Brain microvascular endothelial cell (primary cell): ENCODE measurements at regions of chr17 and their contacts with region 1.

Region 1: DNA sequence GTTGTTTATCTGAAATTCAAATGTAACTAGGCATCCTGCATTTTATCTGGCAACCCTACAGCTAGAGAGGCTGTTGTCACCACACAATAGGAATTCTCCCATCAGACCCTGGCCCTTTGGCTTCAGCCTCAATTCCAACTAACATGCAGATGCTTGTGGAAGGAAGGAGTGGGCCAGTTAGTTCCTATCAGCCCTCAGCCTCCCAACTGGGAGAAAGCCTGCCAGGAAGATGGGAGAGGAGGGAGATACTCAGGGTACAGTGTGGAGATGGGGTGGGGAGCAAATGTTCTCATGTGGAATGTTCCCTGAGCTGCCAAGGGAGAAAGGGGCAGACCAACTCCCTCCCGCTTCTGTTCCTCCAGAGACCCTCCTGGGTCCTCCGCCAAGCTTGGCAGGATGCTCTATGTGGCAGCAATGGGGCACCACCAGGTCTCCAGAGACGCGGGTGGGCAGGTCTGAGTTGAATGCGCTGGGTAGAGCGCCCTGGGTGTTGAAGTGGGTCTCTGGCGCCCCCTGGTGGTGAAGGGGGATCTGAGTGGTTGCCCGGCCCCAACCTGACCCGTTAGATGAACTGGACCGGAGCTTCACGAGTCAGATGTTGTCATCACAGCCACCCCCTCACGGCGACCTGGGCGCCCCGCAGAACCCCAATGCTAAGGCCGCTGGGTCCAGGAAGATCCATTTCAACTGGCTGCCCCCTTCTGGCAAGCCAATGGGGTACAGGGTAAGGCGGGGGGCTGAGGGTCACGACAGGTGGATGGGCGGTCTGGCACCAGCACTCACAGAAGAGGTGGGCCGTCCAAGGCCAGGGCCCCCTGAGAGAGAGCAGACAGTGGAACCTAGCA is 15.2 kb downstream of the GALK1 start:
- DNase-seq: peak; percentile 63
- H3K4me3 ChIP-seq: no peak overlapping the region
- H3K27ac ChIP-seq: no peak overlapping the region
- H3K27me3 ChIP-seq: no peaks in the 10 kb centered on the region
- CTCF ChIP-seq: peak; percentile 92

Region 2: DNA sequence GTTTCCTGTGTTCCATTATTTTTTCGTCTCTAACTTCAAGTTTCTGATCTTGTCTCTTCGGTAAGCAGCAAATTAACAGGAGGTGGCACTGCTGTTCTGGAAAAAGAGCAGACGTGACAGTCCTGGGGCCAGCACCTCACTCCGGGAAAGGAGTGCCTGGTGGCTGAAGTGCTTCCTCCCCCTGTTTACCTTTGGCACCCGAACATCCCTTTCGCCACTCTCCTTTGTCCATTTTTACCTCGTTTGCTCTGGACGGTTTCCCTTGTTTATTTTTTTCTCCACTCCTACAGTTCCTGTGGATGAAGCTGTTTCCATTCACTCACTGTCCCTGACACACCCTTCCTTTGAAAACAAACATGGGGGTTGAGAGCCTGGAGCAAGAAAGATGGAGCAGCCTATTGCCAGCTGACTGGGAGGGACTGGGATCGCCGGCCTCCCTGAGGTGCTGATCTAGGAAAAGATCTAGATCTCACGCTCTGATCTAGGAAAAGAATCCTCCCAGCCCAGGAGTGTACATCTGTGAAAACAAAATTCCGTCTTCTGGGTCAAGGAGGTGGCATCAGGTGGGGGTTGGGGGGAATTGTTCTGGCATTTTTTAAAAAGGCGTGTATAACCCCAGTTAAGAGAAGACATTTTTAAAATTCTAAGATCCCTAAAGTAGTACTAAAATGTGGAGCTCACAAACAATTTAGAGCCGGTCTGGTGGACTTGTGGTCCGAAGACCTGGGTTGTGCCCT is 69.9 kb before region 1 on chr17:
- in situ Hi-C with region 1: loop called (anchors 10 kb)
- DNase-seq: no peak
- H3K4me3 ChIP-seq: no peak overlapping the region
- H3K27ac ChIP-seq: no peak overlapping the region
- H3K27me3 ChIP-seq: no peaks in the 10 kb centered on the region
- CTCF ChIP-seq: peak; percentile 25